GM18951 (cell line): ENCODE measurements at regions of chr1 and their contacts with region 1.

Region 1: GRCh38 chr1:92995441-92996430 is 34.5 kb upstream of the DIPK1A start:
- POLR2A ChIP-seq: no peak

Region 2: GRCh38 chr1:92851729-92852128 is 144.0 kb before region 1 on chr1:
- in situ Hi-C with region 1: loop called (anchors 5 kb)
- POLR2A ChIP-seq: no peak

Region 3: DNA sequence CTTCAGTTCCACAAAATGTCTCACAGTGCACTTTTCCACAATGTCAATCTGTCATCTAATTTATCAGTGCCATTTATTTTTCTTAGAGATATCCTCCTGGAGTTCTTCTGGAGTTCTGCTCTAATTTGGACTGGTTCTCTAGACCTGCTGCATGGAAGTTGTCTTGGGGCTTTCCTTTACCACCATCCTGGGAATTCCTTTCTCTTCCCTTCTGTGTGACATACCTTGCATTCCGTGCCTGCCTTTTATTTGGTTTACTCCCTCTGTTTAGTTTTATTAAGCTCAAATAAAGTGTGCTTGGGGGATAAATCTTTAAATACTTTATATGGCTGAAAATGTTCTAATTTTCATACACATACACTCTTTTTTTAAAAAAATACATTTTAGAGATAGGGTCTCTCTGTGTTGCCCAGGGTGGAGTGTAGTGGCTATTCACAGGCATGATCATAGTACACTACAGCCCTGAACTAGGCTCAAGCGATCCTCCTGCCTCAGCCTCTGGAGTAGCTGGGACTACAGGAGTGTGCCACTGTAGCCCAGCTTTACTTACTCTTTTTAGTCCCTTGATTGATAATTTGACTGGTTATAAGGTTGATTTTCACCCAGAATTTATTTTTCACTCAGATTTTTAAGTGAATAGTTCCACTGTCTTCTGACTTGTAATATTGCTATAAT is 97.7 kb after region 1 on chr1:
- in situ Hi-C with region 1: no loop called
- POLR2A ChIP-seq: no peak